ENCODE measurements at regions of chr17 and their contacts with region 1.

Region 1: DNA sequence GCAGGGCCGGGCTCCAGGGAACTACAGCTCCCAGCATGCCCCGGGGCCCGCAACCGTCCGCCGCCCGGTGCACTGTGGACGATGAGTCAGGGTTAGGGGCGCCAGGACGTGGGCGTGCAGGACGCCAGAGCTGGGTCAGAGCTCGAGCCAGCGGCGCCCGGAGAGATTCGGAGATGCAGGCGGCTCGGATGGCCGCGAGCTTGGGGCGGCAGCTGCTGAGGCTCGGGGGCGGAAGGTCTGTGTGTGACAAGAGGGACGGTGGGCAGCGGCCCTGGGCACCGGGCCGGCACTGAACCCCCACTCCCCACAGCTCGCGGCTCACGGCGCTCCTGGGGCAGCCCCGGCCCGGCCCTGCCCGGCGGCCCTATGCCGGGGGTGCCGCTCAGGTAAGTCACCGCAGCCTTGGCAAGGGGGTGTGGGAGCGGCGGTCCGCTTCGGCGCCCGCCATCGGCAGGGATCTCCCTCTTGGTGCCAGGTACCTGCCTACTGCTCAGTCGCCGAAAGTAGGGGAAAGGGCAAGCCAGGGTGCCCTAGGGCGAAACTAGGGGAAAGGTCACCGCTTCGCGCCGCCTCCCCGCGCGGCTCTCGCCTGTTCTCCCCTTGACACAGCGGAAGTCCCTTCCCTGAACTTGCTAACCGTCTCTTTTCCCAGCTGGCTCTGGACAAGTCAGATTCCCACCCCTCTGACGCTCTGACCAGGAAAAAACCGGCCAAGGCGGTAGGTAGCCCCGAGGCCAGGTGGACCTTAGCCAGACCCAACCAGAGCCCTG is at the starts of genes ACADVL and DLG4:
- DNase-seq: peak; percentile 45 to 87 (median 56)
- ATAC-seq: peak; percentile 76
- H3K4me3 ChIP-seq: peak within 1 kb of the TSS; percentile 73
- H3K4me3 Mint-ChIP-seq: peak within 1 kb of the TSS; percentile 88 to 95 (median 91)
- H3K27ac ChIP-seq: peak within 1 kb of the TSS; percentile 75
- H3K27ac Mint-ChIP-seq: peak within 1 kb of the TSS; percentile 81 to 98 (median 96)
- H3K4me1 ChIP-seq: peaks cover 25 to 47% of the 10 kb centered on the region in 2 donors
- H3K4me1 Mint-ChIP-seq: peaks cover 35 to 61% (median 55%) of the 10 kb centered on the region in 7 donors
- H3K27me3 ChIP-seq: no peaks in the 10 kb centered on the region
- H3K27me3 Mint-ChIP-seq: no peaks in the 10 kb centered on the region
- total RNA-seq, gene ACADVL: 287 to 390 (median 339) TPM
- total RNA-seq, gene DLG4: 10.9 to 25.4 (median 16.5) TPM

Region 2: GRCh38 chr17:7204828-7205461 is 15.1 kb before region 1 on chr17:
- CTCF ChIA-PET with region 1: interaction called, 3 read pairs
- POLR2A ChIA-PET with region 1: interaction called, 3 read pairs
- intact Hi-C with region 1: loop called in 1 of 2 experiments (anchors 2 kb)
- DNase-seq: peak; percentile 90 to 99 (median 97)
- ATAC-seq: peak; percentile 90
- H3K4me3 ChIP-seq: peak overlapping the region; percentile 77
- H3K4me3 Mint-ChIP-seq: peak overlapping the region; percentile 67 to 94 (median 85)
- H3K27ac ChIP-seq: peak overlapping the region; percentile 91
- H3K27ac Mint-ChIP-seq: peak overlapping the region; percentile 88 to 99 (median 95)
- H3K4me1 ChIP-seq: peaks cover 15 to 17% of the 10 kb centered on the region in 2 donors
- H3K4me1 Mint-ChIP-seq: peaks cover 28 to 39% (median 32%) of the 10 kb centered on the region in 7 donors
- H3K27me3 ChIP-seq: no peaks in the 10 kb centered on the region
- H3K27me3 Mint-ChIP-seq: no peaks in the 10 kb centered on the region

Region 3: DNA sequence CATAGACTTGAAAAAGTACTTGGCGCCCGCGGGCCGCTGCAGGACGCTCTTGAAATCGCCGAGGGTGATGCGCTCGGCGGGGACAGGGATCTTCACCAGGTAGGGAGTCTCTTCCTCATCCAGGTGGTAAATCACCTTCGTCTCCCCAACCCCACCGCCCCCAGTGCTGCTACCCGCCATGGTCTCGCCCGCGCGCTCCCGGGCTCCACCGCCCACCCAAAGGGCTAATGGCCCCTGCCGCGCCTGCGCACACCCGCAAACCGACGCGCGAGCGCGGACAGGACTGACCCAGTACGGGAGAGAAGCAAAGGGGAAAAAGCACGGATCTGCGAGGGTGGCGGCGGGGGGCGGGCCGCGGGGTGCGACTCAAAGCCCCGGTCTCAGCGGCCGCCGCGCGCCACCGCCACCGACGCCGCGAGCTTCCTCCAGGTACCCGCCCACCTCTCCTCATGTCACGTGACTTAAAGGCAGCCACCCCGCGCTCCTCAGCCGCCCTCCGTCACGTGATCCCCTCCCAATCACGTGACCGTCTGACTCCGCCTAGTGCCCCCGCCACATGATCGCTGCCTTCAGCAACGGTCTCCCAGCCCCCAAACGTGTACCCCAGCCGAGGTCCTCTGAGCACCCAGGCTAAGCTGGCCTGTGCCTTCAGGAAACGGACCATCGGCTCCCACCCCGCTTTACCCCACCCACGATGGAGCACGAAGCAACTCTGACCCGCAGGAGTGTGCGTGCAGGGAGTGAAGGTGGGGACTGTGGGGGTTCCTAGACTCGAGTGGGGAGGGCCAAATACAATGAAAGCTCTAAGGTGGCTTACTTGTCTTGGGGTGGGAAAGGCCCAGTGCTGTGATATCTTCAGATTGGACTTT is 14.3 kb after region 1 on chr17 and contains the start of gene DVL2:
- CTCF ChIA-PET with region 1: interaction called, 9 read pairs
- POLR2A ChIA-PET with region 1: interaction called, 265 read pairs
- intact Hi-C with region 1: loop called (anchors 1 kb)
- DNase-seq: peak; percentile 89 to 97 (median 93)
- ATAC-seq: peak; percentile 76
- H3K4me3 ChIP-seq: peak within 1 kb of the TSS; percentile 71
- H3K4me3 Mint-ChIP-seq: peak within 1 kb of the TSS; percentile 87 to 98 (median 96)
- H3K27ac ChIP-seq: peak within 1 kb of the TSS; percentile 84
- H3K27ac Mint-ChIP-seq: peak within 1 kb of the TSS; percentile 72 to 96 (median 93)
- H3K4me1 ChIP-seq: peaks cover 15 to 20% of the 10 kb centered on the region in 2 donors
- H3K4me1 Mint-ChIP-seq: peaks cover 41 to 61% (median 52%) of the 10 kb centered on the region in 7 donors
- H3K27me3 ChIP-seq: no peaks in the 10 kb centered on the region
- H3K27me3 Mint-ChIP-seq: peaks cover 0 to 2% (median 0%) of the 10 kb centered on the region in 5 donors
- total RNA-seq, gene DVL2: 51.2 to 91.5 (median 52.3) TPM

Region 4: GRCh38 chr17:7296189-7296902 is 76.3 kb after region 1 on chr17:
- CTCF ChIA-PET with region 1: interaction called, 22 read pairs
- POLR2A ChIA-PET with region 1: interaction called, 7 read pairs
- intact Hi-C with region 1: loop called (anchors 1 kb)
- DNase-seq: peak in 5 of 9 donors; percentile 41 to 86 (median 62)
- ATAC-seq: peak; percentile 63
- H3K4me3 ChIP-seq: no peak overlapping the region
- H3K4me3 Mint-ChIP-seq: peak overlapping the region; percentile 18 to 89 (median 52)
- H3K27ac ChIP-seq: no peak overlapping the region
- H3K27ac Mint-ChIP-seq: peak overlapping the region in 2 of 9 donors; percentile 51 to 66
- H3K4me1 ChIP-seq: peaks cover 12 to 26% of the 10 kb centered on the region in 2 donors
- H3K4me1 Mint-ChIP-seq: peaks cover 6 to 30% (median 25%) of the 10 kb centered on the region in 7 donors
- H3K27me3 ChIP-seq: no peaks in the 10 kb centered on the region
- H3K27me3 Mint-ChIP-seq: peaks cover 4 to 54% (median 18%) of the 10 kb centered on the region in 5 donors

Measured in naive thymus-derived CD4-positive, alpha-beta T cell (primary cell).